Dendritic cell treated with granulocyte-macrophage colony-stimulating factor and Interleukin-4, amounts not matched to agents 40 ng/mL and 50 ng/mL, for 4 days (primary cell): ENCODE measurements at regions of chr16 and their contacts with region 1.

Region 1: DNA sequence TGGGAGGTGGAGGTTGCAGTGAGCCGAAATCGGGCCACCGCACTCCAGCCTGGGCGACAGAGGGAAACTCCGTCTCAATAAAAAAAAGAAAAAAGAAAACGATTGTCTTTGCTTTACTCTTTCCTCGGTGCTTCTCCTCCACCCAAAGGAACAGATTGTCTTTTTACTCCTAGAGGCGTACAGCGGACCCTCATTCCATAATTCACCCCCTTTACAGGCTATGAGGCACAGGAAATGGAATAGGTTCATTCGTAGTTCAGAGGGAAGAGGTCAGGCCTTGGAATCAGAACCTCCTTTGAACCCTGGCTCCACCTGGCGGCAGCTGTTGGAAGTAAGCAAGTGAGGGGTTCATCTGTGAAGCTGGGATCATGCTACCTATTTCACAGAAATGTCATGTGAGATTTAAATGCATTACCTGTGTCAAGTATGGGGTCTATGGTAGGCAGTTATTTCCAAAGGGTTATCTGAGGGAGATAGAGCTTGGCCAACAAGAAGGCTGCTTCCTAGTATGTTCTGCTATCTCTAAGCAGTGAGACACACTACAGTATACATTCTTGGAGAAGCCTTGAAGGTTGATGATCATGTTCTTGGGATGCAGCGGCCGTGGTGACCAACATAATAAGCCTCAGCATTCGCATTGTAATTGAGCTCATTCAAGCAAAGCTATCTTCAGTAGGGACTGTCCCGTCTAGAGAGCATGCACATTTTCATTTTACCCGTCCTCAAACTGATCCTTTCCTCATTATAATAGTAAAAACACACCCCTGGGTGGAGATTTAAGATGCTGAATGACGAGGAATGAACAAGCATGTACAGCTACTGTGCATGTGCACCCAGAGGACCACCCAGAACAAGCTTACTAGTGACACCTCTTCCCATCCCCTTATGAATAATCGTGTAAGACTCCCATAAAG is 18.7 kb upstream of the ZNF689 start:
- H3K4me3 Mint-ChIP-seq: peak overlapping the region; percentile 23
- H3K27ac Mint-ChIP-seq: peak overlapping the region; percentile 41
- H3K4me1 Mint-ChIP-seq: peaks cover 6% of the 10 kb centered on the region
- H3K27me3 Mint-ChIP-seq: no peaks in the 10 kb centered on the region

Region 2: GRCh38 chr16:30518555-30518954 is 110.3 kb before region 1 on chr16:
- intact Hi-C with region 1: no loop called
- H3K4me3 Mint-ChIP-seq: no peak overlapping the region
- H3K27ac Mint-ChIP-seq: no peak overlapping the region
- H3K4me1 Mint-ChIP-seq: no peaks in the 10 kb centered on the region
- H3K27me3 Mint-ChIP-seq: no peaks in the 10 kb centered on the region

Region 3: GRCh38 chr16:30650369-30651123 is 21.7 kb after region 1 on chr16 and contains the start of gene PRR14:
- intact Hi-C with region 1: loop called (anchors 1 kb)
- H3K4me3 Mint-ChIP-seq: peak within 1 kb of the TSS; percentile 90
- H3K27ac Mint-ChIP-seq: peak within 1 kb of the TSS; percentile 99
- H3K4me1 Mint-ChIP-seq: peaks cover 43% of the 10 kb centered on the region
- H3K27me3 Mint-ChIP-seq: no peaks in the 10 kb centered on the region